Heart right ventricle (tissue), 16 donors: ENCODE measurements at regions of chr9 and their contacts with region 1.

Region 1: GRCh38 chr9:111298731-111299598 is 31.1 kb downstream of the OR2K2 start:
- DNase-seq: peak; percentile 31 to 39
- ATAC-seq: peak in 7 of 8 donors; percentile 78 to 90 (median 80)
- H3K4me3 ChIP-seq: peak overlapping the region in 3 of 10 donors; percentile 9 to 25 (median 21)
- H3K27ac ChIP-seq: peak overlapping the region in 6 of 10 donors; percentile 0 to 51 (median 26)
- H3K4me1 ChIP-seq: peaks cover 0 to 7% (median 0%) of the 10 kb centered on the region in 9 donors
- H3K27me3 ChIP-seq: peaks cover 0 to 8% (median 6%) of the 10 kb centered on the region in 7 donors
- CTCF ChIP-seq: peak; percentile 73 to 83 (median 78)

Region 2: GRCh38 chr9:110638381-110638954 is 660.5 kb before region 1 on chr9:
- intact Hi-C with region 1: loop called in 9 of 10 experiments (anchors 1 to 10 kb)
- DNase-seq: no peak
- ATAC-seq: no peak
- H3K4me3 ChIP-seq: no peak overlapping the region
- H3K27ac ChIP-seq: no peak overlapping the region
- H3K4me1 ChIP-seq: no peaks in the 10 kb centered on the region
- H3K27me3 ChIP-seq: no peaks in the 10 kb centered on the region
- CTCF ChIP-seq: peak in 7 of 9 donors; percentile 27 to 59 (median 48)

Region 3: DNA sequence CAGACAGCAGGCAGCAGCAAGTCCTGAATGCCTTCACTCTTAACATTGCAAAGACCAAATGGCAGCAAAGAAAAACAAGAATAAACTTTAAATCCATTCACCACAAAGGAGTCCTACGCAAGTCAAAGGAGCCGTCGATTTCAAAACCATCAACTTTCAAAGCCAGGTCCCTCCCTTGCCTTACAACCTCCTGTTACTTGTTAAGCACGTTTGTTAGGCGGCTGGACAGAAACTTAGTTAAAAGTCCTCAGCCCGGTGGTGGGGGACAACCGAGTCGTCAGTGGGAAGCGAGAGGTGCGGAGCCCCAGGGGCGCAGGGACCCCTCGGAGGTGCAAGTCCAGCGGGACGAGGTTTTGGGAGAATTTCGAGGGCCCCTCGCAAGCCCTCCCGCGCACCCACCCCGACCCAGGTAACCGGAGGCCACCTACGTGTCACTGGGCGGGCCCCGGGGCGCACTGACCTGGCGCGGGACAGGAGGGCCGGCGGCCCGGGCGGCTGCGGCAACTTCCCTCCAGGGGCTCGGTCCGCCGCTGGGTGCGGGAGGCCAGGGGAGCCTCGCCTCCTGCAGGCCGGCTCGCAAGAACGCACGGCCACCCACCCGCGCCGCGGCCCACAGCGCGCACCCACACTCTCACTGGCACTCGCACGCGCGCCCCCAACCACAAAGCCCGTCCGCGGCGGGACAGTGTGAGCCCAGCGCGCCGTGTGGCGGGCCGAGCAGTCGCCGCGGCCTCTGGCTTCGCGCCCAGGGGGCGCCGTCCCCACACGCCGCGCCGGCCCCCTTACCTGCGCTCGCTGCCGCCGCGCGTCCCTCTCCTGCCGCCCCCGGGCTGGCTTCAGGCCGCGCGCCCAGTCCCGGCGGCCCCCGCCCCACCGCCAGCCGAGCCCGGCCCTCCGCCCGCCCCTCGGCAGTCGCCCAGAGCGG is 261.3 kb before region 1 on chr9:
- intact Hi-C with region 1: loop called in 3 of 10 experiments (anchors 5 to 10 kb)
- DNase-seq: peak in 1 of 2 donors; percentile 34
- ATAC-seq: peak in 4 of 8 donors; percentile 25 to 41 (median 33)
- H3K4me3 ChIP-seq: peak overlapping the region; percentile 35 to 70 (median 56)
- H3K27ac ChIP-seq: peak overlapping the region; percentile 52 to 91 (median 78)
- H3K4me1 ChIP-seq: peaks cover 0 to 33% (median 6%) of the 10 kb centered on the region in 9 donors
- H3K27me3 ChIP-seq: peaks cover 4 to 65% (median 54%) of the 10 kb centered on the region in 7 donors
- CTCF ChIP-seq: peak in 1 of 9 donors; percentile 18

Region 4: GRCh38 chr9:111161015-111161415 is 137.9 kb before region 1 on chr9:
- intact Hi-C with region 1: loop called in 1 of 10 experiments (anchors 5 kb)
- DNase-seq: no peak
- ATAC-seq: peak in 3 of 8 donors; percentile 34 to 81 (median 56)
- H3K4me3 ChIP-seq: no peak overlapping the region
- H3K27ac ChIP-seq: no peak overlapping the region
- H3K4me1 ChIP-seq: peaks cover 0 to 22% (median 0%) of the 10 kb centered on the region in 9 donors
- H3K27me3 ChIP-seq: no peaks in the 10 kb centered on the region
- CTCF ChIP-seq: no peak